ENCODE measurements at regions of chr22 and their contacts with region 1.

Region 1: GRCh38 chr22:18077639-18078328 is at the start of gene PEX26:
- DNase-seq: no peak
- H3K4me3 ChIP-seq: peak within 1 kb of the TSS; percentile 90
- CTCF ChIP-seq: no peak

Region 2: DNA sequence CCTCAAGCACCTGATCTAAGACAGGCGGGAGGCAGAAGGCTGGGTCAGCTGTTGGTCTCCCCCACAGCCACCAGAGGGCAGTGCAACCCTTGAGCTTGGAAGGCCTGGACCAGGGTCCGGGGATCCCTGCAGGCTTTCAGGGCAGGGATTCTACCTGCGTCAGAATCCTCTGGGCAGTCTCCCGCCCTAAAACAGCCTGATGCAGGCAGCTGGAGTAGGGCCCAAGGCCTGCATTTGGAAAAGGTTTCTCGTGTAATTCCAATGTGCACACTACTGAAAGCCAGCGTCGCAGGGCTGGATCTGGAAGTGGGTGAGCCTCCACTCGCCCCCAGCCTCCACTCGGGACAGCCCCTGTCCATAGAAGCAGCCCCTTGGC is 335.3 kb before region 1 on chr22:
- CTCF ChIA-PET with region 1: interaction called, 37 read pairs
- POLR2A ChIA-PET with region 1: no interaction called
- DNase-seq: no peak
- H3K4me3 ChIP-seq: no peak overlapping the region
- CTCF ChIP-seq: peak; percentile 93

Region 3: GRCh38 chr22:17830043-17830961 is 247.5 kb before region 1 on chr22:
- CTCF ChIA-PET with region 1: interaction called, 454 read pairs
- POLR2A ChIA-PET with region 1: interaction called, 4 read pairs
- DNase-seq: peak; percentile 19
- H3K4me3 ChIP-seq: no peak overlapping the region
- CTCF ChIP-seq: peak; percentile 99

Region 4: GRCh38 chr22:17897426-17897825 is 180.4 kb before region 1 on chr22:
- CTCF ChIA-PET with region 1: interaction called, 59 read pairs
- POLR2A ChIA-PET with region 1: no interaction called
- DNase-seq: no peak
- H3K4me3 ChIP-seq: no peak overlapping the region
- CTCF ChIP-seq: no peak

Region 5: GRCh38 chr22:17938484-17938924 is 139.3 kb before region 1 on chr22:
- CTCF ChIA-PET with region 1: interaction called, 12 read pairs
- POLR2A ChIA-PET with region 1: no interaction called
- DNase-seq: no peak
- H3K4me3 ChIP-seq: no peak overlapping the region
- CTCF ChIP-seq: no peak

Region 6: DNA sequence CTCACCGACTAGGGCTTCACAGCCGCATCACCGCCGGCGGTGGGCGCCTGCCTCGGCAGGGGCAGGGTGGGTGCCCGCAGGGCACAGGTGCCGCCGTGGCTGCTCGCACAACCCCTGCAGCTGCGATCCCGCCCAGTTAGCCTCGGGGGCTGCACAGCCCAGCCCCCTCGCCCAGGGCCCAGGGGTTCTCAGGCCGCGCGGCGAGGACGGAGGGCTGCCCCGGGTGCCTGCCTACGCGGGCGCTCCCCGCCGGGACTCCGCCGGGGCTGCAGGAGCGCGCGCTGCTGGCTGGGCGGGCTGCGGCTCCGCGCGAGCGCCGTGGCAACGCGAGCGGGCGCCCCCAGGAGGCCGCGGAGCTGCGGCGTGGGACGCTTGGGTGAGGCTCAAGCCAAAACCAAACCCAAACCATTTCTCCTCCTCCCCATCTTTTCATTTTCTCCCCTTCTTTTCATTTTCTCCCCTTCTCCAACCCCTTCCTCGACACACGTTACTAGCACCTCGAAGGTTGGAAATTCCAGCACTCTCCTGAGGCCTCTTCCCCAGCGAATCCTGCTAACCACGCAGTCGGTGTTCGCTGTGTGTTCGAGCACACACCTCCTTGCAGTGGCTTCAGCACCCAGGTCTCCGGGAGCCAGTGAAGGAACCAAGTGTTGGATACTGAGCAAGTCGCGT is 53.4 kb before region 1 on chr22 and contains the start of gene MICAL3:
- CTCF ChIA-PET with region 1: interaction called, 25 read pairs
- POLR2A ChIA-PET with region 1: interaction called, 4 read pairs
- DNase-seq: no peak
- H3K4me3 ChIP-seq: peak within 1 kb of the TSS; percentile 68
- CTCF ChIP-seq: peak; percentile 74

Region 7: GRCh38 chr22:18144105-18144504 is 66.3 kb after region 1 on chr22:
- CTCF ChIA-PET with region 1: no interaction called
- POLR2A ChIA-PET with region 1: no interaction called
- DNase-seq: no peak
- H3K4me3 ChIP-seq: no peak overlapping the region
- CTCF ChIP-seq: no peak